Activated CD4-positive, alpha-beta memory T cell treated with anti-CD3 and anti-CD28 coated beads, Interleukin-2, amount 10 ng/mL, durations not matched to agents 7 days and 5 days (primary cell): ENCODE measurements at regions of chr10 and their contacts with region 1.

Region 1: GRCh38 chr10:35195361-35196306 is 69.0 kb downstream of the CREM start:
- DNase-seq: peak; percentile 86
- H3K4me3 Mint-ChIP-seq: peak overlapping the region; percentile 84
- H3K27ac Mint-ChIP-seq: peak overlapping the region; percentile 100
- H3K4me1 Mint-ChIP-seq: peaks cover 60% of the 10 kb centered on the region
- H3K27me3 Mint-ChIP-seq: no peaks in the 10 kb centered on the region

Region 2: DNA sequence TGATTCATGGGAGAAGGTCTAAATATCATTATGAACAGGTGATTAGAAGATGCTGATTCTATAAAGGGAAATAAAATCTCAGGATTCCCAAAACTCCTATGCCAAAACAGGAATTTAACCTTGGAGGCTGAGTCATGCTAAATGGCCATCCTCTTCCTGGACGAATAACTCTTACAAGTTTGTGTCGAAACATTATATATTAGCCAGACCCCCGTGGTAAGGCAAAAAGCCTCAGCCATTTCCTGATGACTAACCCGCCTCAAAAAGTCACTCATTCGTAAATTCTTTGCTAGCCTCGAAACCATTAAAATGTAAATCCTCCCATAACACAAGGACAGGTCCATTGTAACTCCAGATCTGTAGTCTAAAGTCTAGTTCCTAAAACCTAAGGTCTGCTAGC is 137.5 kb before region 1 on chr10:
- CTCF ChIA-PET with region 1: no interaction called
- POLR2A ChIA-PET with region 1: no interaction called
- DNase-seq: no peak
- H3K4me3 Mint-ChIP-seq: no peak overlapping the region
- H3K27ac Mint-ChIP-seq: no peak overlapping the region
- H3K4me1 Mint-ChIP-seq: peaks cover 10% of the 10 kb centered on the region
- H3K27me3 Mint-ChIP-seq: no peaks in the 10 kb centered on the region

Region 3: DNA sequence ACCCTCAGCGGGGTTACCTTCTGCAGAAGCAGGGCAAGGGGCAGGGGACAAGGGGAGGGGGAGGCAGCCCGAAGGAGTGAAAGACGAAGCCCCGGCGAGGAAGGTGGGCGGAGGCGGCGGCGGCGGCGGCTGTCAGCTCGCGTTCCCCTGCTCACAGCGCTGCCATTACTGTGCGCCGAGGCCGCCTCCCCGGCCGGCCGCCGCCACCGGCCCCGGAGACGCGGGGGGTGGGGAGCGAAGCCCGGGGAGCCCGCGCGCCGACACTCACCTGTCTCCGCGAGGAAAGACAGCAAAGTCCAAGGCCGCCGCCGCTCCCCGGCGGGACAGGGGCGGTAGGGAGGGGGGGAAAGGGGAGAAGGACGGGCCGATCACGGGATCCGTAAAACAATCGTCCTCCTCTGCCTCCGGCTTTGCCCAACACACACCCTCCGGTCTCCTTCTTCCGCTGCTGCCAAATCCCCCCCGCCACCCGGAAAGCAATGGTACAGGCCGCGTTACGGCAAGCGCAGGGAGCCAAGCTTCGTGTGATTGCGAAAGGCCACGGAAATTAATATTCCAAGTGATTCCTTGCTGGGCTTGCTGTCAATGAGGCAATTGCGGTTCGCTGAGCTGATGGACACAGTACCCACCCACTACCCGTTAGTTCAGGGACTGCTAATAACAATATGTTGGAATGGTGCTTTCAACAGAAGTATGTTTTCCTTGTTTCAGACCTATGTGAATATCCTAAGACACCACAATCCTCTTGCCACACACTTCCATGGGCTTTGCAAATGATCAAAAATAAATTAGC is 105.3 kb before region 1 on chr10 and contains the start of gene CUL2:
- CTCF ChIA-PET with region 1: interaction called, 6 read pairs
- POLR2A ChIA-PET with region 1: interaction called, 19 read pairs
- DNase-seq: peak; percentile 92
- H3K4me3 Mint-ChIP-seq: peak within 1 kb of the TSS; percentile 91
- H3K27ac Mint-ChIP-seq: peak within 1 kb of the TSS; percentile 96
- H3K4me1 Mint-ChIP-seq: peaks cover 40% of the 10 kb centered on the region
- H3K27me3 Mint-ChIP-seq: no peaks in the 10 kb centered on the region
- total RNA-seq, gene CUL2: 30.6 to 34.3 TPM

Region 4: DNA sequence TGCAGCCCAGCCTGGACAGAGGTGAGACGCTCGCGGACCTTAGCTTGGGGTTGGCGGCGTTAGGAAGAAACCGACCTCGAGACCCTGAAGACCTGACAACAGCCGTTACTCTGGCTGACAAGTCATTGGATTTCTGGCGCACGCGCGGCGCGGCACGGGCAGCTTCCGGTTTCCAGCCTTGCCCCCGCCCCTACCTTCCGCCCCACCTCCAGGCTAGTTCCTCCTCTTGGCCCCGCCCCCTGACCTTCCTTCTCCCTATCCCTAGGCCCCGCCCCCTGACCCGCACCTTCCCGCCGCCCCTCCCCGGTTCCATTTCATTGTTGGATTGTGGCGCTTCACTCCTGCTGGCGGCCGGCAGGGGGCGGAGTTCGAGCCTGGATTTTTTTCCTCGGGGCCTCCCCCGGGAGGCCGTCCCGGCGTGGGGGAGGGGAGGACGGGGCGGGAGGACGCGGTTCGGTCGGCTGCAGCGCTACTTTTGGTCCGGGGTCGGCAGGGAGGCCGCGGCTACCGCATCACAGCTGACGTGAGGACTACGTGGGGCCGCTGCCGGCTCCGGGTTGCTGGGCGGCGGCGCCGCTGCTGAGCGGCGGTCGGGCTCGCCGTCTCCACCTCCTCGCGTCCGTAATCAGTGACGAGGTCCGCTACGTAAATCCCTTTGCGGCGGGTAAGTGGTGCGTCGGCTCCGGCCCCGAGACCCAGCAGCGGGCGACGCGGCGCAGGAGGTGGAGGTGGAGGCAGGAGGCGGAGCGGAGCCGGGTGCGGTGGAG is 68.9 kb before region 1 on chr10 and contains the start of gene CREM:
- CTCF ChIA-PET with region 1: interaction called, 219 read pairs
- POLR2A ChIA-PET with region 1: interaction called, 730 read pairs
- DNase-seq: peak; percentile 99
- H3K4me3 Mint-ChIP-seq: peak within 1 kb of the TSS; percentile 94
- H3K27ac Mint-ChIP-seq: peak within 1 kb of the TSS; percentile 95
- H3K4me1 Mint-ChIP-seq: peaks cover 61% of the 10 kb centered on the region
- H3K27me3 Mint-ChIP-seq: no peaks in the 10 kb centered on the region
- total RNA-seq, gene CREM: 154 to 157 TPM

Region 5: DNA sequence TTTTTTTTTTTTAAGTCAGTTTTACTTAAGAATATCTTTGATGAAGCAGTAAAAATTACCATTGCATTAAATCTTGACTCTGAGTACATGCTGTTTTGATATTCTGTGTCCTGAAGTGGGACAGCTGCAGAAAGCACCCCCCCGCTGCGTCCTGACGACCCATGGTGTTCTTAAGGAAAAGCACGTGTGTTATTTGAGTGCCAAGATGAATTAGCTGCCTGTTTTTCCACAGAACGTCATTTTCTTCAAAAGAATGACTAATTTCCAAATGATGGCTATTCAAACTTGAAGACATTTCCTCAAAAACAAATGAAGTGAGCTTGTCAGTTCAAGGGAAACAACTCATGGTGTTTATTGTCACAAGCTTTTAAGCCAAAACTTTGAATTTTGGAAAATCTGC is 23.1 kb before region 1 on chr10:
- CTCF ChIA-PET with region 1: interaction called, 13 read pairs
- POLR2A ChIA-PET with region 1: no interaction called
- DNase-seq: no peak
- H3K4me3 Mint-ChIP-seq: no peak overlapping the region
- H3K27ac Mint-ChIP-seq: no peak overlapping the region
- H3K4me1 Mint-ChIP-seq: peaks cover 4% of the 10 kb centered on the region
- H3K27me3 Mint-ChIP-seq: no peaks in the 10 kb centered on the region

Region 6: DNA sequence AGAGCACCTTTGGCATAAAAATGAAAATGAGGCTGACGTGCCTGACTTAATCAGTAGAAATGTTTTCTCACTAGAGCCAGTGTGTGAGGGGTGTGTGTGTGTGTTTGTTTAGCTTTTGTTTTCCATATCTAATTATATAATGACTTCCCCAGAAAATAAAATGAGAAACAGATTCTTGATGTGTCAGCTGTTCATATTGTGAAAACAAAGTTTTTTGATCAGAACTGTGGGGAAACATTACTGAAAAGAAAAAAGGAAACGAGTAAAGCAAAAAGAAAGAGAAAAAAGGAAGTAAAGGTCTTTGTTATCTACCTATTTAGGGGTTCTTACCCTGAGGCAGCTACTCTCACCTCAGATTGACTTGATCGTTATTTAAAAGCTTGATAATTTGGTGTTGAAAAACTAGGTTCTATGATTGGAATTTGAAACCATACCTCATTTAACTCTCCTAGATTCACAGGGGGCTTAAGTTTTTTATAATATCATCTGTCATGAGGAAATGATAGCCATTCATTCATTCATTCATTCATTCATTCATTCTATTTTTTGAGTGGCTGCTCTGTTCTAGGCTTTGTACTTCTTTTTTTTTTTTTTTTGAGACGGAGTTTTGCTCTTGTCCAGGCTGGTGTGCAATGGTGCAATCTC is 11.0 kb before region 1 on chr10:
- CTCF ChIA-PET with region 1: interaction called, 13 read pairs
- POLR2A ChIA-PET with region 1: interaction called, 19 read pairs
- DNase-seq: no peak
- H3K4me3 Mint-ChIP-seq: no peak overlapping the region
- H3K27ac Mint-ChIP-seq: no peak overlapping the region
- H3K4me1 Mint-ChIP-seq: peaks cover 8% of the 10 kb centered on the region
- H3K27me3 Mint-ChIP-seq: no peaks in the 10 kb centered on the region

Region 7: DNA sequence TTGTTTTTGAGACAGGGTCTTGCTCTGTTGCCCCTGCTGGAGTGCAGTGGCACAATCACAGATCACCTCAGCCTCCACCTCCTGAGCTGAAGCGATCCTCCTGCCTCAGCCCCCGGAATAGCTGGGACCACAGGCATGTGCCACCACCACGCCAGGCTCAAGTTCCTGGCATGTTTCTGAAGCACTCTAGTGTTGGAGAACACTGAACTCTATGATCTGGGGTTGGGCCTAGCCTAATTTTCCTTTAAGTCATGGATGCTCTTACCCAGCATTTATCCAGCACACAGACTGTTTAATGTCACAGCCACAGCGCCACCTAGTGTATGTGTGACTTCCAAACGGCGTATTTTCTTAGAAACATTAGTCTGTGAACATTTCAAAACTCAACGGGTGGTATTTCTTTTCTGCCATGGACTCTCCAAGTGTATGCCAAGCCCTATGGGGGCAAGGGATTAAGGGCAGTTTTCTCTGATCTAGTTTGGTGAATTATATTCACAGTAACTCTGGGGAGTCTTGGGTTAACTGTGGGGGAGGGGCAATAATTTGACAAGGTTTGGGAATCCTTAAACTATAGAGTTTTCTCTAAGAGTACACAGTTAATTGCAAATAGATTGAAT is 22.8 kb after region 1 on chr10:
- CTCF ChIA-PET with region 1: interaction called, 87 read pairs
- POLR2A ChIA-PET with region 1: interaction called, 120 read pairs
- DNase-seq: peak; percentile 88
- H3K4me3 Mint-ChIP-seq: peak overlapping the region; percentile 51
- H3K27ac Mint-ChIP-seq: peak overlapping the region; percentile 76
- H3K4me1 Mint-ChIP-seq: peaks cover 55% of the 10 kb centered on the region
- H3K27me3 Mint-ChIP-seq: no peaks in the 10 kb centered on the region

Region 8: DNA sequence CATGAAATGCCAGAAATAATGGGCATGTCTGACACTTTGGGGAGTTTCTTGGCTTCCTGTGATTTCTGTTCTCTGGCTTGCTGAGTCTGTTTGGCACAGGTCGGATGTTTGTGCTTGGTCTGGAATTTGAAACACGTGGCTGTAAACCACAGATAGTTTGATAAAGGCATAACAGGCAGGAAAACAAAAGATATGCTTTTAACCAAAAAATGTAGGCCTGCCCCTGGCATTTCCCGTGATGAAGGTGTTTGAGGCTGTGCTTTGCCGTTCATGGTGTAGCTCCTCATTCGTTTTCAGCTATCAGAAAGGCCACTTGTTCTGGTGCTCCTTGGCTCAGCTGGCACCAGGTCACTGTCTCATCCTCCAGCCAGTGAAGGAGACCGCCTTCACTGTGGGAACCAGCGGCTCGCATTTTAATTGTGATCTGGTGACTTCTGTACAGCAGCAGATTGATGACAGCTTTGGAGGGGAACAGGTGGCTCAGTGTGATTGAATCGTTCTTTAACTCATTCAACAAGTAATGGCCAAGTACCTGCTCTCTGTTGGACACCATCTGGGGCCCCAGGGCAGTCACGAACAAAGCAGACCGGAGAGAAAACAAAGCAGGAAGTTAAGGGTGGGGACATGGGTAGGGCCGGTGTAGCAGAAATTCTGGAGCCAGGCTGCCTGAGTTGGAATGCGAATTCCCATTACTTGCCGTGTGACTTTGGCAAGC is 252.2 kb after region 1 on chr10:
- CTCF ChIA-PET with region 1: no interaction called
- POLR2A ChIA-PET with region 1: no interaction called
- DNase-seq: peak; percentile 26
- H3K4me3 Mint-ChIP-seq: peak overlapping the region; percentile 43
- H3K27ac Mint-ChIP-seq: peak overlapping the region; percentile 80
- H3K4me1 Mint-ChIP-seq: peaks cover 57% of the 10 kb centered on the region
- H3K27me3 Mint-ChIP-seq: no peaks in the 10 kb centered on the region